ENCODE measurements at regions of chr5 and their contacts with region 1.

Region 1: GRCh38 chr5:75023368-75024159 is 28.8 kb downstream of the GCNT4 start:
- DNase-seq: peak in 6 of 9 donors; percentile 22 to 41 (median 37)
- ATAC-seq: peak; percentile 83
- H3K4me3 ChIP-seq: no peak overlapping the region
- H3K4me3 Mint-ChIP-seq: peak overlapping the region; percentile 1 to 65 (median 46)
- H3K27ac ChIP-seq: no peak overlapping the region
- H3K27ac Mint-ChIP-seq: peak overlapping the region in 8 of 9 donors; percentile 28 to 85 (median 66)
- H3K4me1 ChIP-seq: peaks cover 11 to 25% of the 10 kb centered on the region in 2 donors
- H3K4me1 Mint-ChIP-seq: peaks cover 28 to 49% (median 40%) of the 10 kb centered on the region in 7 donors
- H3K27me3 ChIP-seq: no peaks in the 10 kb centered on the region
- H3K27me3 Mint-ChIP-seq: peaks cover 0 to 3% (median 0%) of the 10 kb centered on the region in 5 donors

Region 2: GRCh38 chr5:74934949-74935751 is 88.4 kb before region 1 on chr5:
- CTCF ChIA-PET with region 1: no interaction called
- POLR2A ChIA-PET with region 1: no interaction called
- intact Hi-C with region 1: no loop called
- DNase-seq: peak in 8 of 9 donors; percentile 14 to 65 (median 44)
- ATAC-seq: peak; percentile 79
- H3K4me3 ChIP-seq: peak overlapping the region; percentile 34
- H3K4me3 Mint-ChIP-seq: peak overlapping the region; percentile 65 to 84 (median 76)
- H3K27ac ChIP-seq: peak overlapping the region; percentile 50
- H3K27ac Mint-ChIP-seq: peak overlapping the region; percentile 52 to 89 (median 85)
- H3K4me1 ChIP-seq: peaks cover 9 to 20% of the 10 kb centered on the region in 2 donors
- H3K4me1 Mint-ChIP-seq: peaks cover 13 to 50% (median 42%) of the 10 kb centered on the region in 7 donors
- H3K27me3 ChIP-seq: no peaks in the 10 kb centered on the region
- H3K27me3 Mint-ChIP-seq: peaks cover 0 to 6% (median 0%) of the 10 kb centered on the region in 5 donors

Region 3: DNA sequence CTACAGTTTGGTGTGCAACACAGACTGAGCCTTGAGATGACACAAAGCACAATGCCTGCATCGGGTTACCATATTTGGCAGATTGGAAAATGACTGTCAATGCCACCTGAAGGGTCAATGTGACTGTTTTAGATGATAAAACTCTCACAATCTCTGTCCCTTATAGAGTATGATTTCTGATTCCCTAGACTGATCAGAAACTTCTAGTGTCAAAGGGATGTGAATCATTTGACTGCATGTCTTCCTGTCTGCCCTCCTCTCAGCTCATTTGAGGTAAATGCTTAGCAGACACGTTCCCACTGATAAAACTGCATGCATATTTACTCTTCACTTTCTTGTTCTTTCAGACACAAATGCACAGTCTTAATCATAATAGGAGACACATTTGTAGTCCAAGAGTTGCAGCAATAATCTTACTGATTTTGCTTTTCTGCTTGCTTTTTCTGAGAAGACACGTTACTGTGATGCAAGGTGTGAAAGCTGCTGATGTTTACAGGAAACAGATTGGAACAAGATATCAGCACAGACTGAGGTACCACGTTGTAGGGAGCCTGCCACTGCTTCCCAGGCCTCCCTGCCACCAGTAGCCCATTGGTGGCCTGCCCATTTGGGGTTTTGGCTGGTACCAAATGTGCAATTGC is 49.0 kb before region 1 on chr5:
- CTCF ChIA-PET with region 1: no interaction called
- POLR2A ChIA-PET with region 1: interaction called, 3 read pairs
- intact Hi-C with region 1: loop called in 1 of 2 experiments (anchors 10 kb)
- DNase-seq: peak in 6 of 9 donors; percentile 16 to 46 (median 39)
- ATAC-seq: peak; percentile 76
- H3K4me3 ChIP-seq: no peak overlapping the region
- H3K4me3 Mint-ChIP-seq: peak overlapping the region in 8 of 10 donors; percentile 33 to 72 (median 54)
- H3K27ac ChIP-seq: no peak overlapping the region
- H3K27ac Mint-ChIP-seq: peak overlapping the region; percentile 51 to 93 (median 84)
- H3K4me1 ChIP-seq: peaks cover 13 to 36% of the 10 kb centered on the region in 2 donors
- H3K4me1 Mint-ChIP-seq: peaks cover 16 to 42% (median 31%) of the 10 kb centered on the region in 7 donors
- H3K27me3 ChIP-seq: no peaks in the 10 kb centered on the region
- H3K27me3 Mint-ChIP-seq: peaks cover 0 to 1% (median 0%) of the 10 kb centered on the region in 5 donors

Region 4: DNA sequence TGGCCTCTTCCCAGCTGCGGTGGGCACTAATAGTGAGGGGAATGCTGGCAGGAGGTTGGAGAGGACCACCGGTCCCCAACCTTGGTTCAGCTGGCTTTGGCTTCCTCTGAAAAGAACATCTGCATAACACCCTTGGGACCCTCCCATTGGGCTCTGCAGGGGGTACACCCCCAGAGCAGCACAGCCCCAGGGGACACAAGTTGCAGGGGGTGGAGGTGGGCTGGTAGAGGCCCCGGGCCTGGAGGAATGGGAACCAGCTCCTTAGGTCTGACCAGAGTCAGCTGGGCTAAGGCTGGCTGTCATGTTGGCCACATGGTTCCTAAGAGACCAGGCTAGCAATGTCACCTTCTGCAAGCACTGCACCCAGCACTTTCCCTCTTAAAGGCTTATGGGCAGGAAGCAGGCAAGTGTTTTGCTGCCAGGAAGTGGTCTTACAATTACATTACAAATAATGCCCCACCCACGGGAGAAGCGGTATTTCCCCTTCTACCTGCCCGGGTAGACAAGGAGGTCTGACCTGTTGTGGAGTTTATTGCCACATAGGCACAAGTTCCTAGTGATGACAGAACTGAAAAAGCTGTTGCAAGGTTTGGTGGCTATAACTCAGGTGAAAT is 10.7 kb after region 1 on chr5:
- CTCF ChIA-PET with region 1: no interaction called
- POLR2A ChIA-PET with region 1: interaction called, 15 read pairs
- intact Hi-C with region 1: no loop called
- DNase-seq: peak in 7 of 9 donors; percentile 23 to 69 (median 52)
- ATAC-seq: peak; percentile 74
- H3K4me3 ChIP-seq: peak overlapping the region; percentile 10
- H3K4me3 Mint-ChIP-seq: peak overlapping the region; percentile 19 to 76 (median 62)
- H3K27ac ChIP-seq: peak overlapping the region; percentile 31
- H3K27ac Mint-ChIP-seq: peak overlapping the region in 8 of 9 donors; percentile 76 to 97 (median 82)
- H3K4me1 ChIP-seq: peaks cover 25 to 42% of the 10 kb centered on the region in 2 donors
- H3K4me1 Mint-ChIP-seq: peaks cover 22 to 94% (median 85%) of the 10 kb centered on the region in 7 donors
- H3K27me3 ChIP-seq: no peaks in the 10 kb centered on the region
- H3K27me3 Mint-ChIP-seq: no peaks in the 10 kb centered on the region

Region 5: DNA sequence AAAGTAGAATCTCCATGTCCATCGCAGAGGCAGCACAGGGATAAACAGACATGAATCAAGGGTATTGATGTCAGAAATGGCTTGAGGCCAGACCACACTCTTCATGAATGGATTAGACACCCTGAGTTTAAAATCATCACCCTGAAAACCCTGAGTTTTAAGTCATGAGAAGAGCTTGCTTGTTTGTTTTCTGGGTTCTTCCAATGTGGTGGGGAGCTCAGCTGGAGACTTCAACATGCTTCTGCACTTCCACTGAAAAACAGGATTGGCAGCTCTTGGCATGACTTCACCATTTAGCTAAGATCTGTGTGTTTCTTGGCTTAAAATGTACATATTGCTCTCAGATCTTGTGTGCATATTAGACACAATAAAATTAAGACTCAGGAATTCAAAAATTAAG is 19.0 kb after region 1 on chr5:
- CTCF ChIA-PET with region 1: no interaction called
- POLR2A ChIA-PET with region 1: interaction called, 8 read pairs
- intact Hi-C with region 1: loop called in 1 of 2 experiments (anchors 2 kb)
- DNase-seq: no peak
- ATAC-seq: no peak
- H3K4me3 ChIP-seq: no peak overlapping the region
- H3K4me3 Mint-ChIP-seq: no peak overlapping the region
- H3K27ac ChIP-seq: no peak overlapping the region
- H3K27ac Mint-ChIP-seq: peak overlapping the region in 2 of 9 donors; percentile 25 to 66
- H3K4me1 ChIP-seq: peaks cover 0 to 10% of the 10 kb centered on the region in 2 donors
- H3K4me1 Mint-ChIP-seq: peaks cover 19 to 90% (median 78%) of the 10 kb centered on the region in 7 donors
- H3K27me3 ChIP-seq: no peaks in the 10 kb centered on the region
- H3K27me3 Mint-ChIP-seq: no peaks in the 10 kb centered on the region

Region 6: DNA sequence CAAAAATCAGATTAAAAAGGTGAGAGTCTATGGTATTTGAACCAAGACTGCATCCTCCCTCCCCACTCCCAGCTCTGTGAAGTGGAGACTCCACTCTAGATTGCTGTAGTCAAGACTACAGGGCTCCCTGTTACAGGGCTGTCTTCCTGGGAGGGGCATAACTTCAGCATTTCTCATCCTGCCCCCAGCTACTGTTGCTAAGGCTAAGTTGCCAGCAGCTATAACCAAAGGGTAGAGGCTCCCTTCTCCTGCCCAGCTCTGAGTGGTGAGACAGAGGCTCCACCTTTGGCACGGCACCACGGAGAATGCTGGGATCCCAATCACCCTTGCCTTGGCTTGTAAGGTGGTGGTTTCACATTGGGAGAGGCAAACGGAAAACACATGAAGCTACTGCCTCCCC is 68.0 kb after region 1 on chr5:
- CTCF ChIA-PET with region 1: no interaction called
- POLR2A ChIA-PET with region 1: no interaction called
- intact Hi-C with region 1: no loop called
- DNase-seq: no peak
- ATAC-seq: no peak
- H3K4me3 ChIP-seq: no peak overlapping the region
- H3K4me3 Mint-ChIP-seq: no peak overlapping the region
- H3K27ac ChIP-seq: no peak overlapping the region
- H3K27ac Mint-ChIP-seq: no peak overlapping the region
- H3K4me1 ChIP-seq: peaks cover 0 to 5% of the 10 kb centered on the region in 2 donors
- H3K4me1 Mint-ChIP-seq: peaks cover 0 to 45% (median 17%) of the 10 kb centered on the region in 7 donors
- H3K27me3 ChIP-seq: no peaks in the 10 kb centered on the region
- H3K27me3 Mint-ChIP-seq: peaks cover 0 to 2% (median 0%) of the 10 kb centered on the region in 5 donors